ENCODE measurements at regions of chr3 and their contacts with region 1.

Region 1: GRCh38 chr3:88203642-88204055 is 53.9 kb downstream of the C3orf38 start:
- DNase-seq: peak; percentile 41 to 70
- ATAC-seq: peak; percentile 80

Region 2: DNA sequence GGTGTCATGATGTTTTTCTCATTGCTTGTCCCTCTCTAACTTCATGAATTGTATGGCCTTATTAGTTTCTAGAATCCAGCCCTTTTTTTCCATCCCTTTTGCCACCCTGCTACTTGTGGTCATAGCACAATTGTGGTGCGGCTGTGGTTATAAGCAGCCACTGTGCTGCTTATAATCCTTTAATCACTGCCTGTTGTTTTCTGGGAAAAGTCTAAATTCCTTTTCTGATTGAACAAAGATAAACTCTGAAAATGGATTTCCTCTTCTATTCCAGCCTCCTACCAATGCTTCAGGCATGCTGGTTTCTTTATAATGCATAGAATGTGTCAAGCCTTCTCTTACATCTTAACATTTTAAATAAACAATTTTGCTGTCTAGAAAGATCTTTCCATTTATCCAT is 265.6 kb after region 1 on chr3:
- intact Hi-C with region 1: no loop called
- DNase-seq: no peak
- ATAC-seq: no peak

Region 3: GRCh38 chr3:89107461-89108290 is 904.0 kb after region 1 on chr3 and contains the start of gene EPHA3:
- intact Hi-C with region 1: loop called in 1 of 2 experiments (anchors 10 kb)
- DNase-seq: peak; percentile 54 to 65
- ATAC-seq: peak; percentile 93
- total RNA-seq, gene EPHA3: 1.0 to 1.8 TPM

Region 4: GRCh38 chr3:90091204-90091924 is 1887.7 kb after region 1 on chr3:
- intact Hi-C with region 1: loop called in 1 of 2 experiments (anchors 10 kb)
- DNase-seq: peak in 1 of 2 donors; percentile 8
- ATAC-seq: peak; percentile 79